ENCODE measurements at regions of chr14 and their contacts with region 1.

Region 1: GRCh38 chr14:65412032-65412846 is at the start of gene FUT8:
- DNase-seq: peak; percentile 98
- H3K4me3 ChIP-seq: peak within 1 kb of the TSS; percentile 76 to 96 (median 85)
- H3K27ac ChIP-seq: peak within 1 kb of the TSS; percentile 61
- H3K4me1 ChIP-seq: peaks cover 18% of the 10 kb centered on the region
- H3K27me3 ChIP-seq: no peaks in the 10 kb centered on the region
- CTCF ChIP-seq: peak; percentile 60 to 80
- POLR2A ChIP-seq: peak; percentile 86
- total RNA-seq, gene FUT8: 27.7 and 38.8 TPM in 2 replicates

Region 2: GRCh38 chr14:65164068-65164824 is 248.0 kb before region 1 on chr14:
- CTCF ChIA-PET with region 1: interaction called, 122 read pairs
- POLR2A ChIA-PET with region 1: interaction called, 3 read pairs
- dilution Hi-C with region 1: no loop called
- intact Hi-C with region 1: loop called (anchors 1 kb)
- DNase-seq: peak; percentile 58
- H3K4me3 ChIP-seq: no peak overlapping the region
- H3K27ac ChIP-seq: no peak overlapping the region
- H3K4me1 ChIP-seq: no peaks in the 10 kb centered on the region
- H3K27me3 ChIP-seq: no peaks in the 10 kb centered on the region
- CTCF ChIP-seq: peak; percentile 36 to 41
- POLR2A ChIP-seq: no peak

Region 3: GRCh38 chr14:65423982-65424381 is 11.7 kb after region 1 on chr14:
- CTCF ChIA-PET with region 1: interaction called, 14 read pairs
- POLR2A ChIA-PET with region 1: no interaction called
- dilution Hi-C with region 1: no loop called
- intact Hi-C with region 1: no loop called
- DNase-seq: no peak
- H3K4me3 ChIP-seq: no peak overlapping the region
- H3K27ac ChIP-seq: no peak overlapping the region
- H3K4me1 ChIP-seq: peaks cover 2% of the 10 kb centered on the region
- H3K27me3 ChIP-seq: no peaks in the 10 kb centered on the region
- CTCF ChIP-seq: no peak
- POLR2A ChIP-seq: no peak

Region 4: GRCh38 chr14:65476273-65476941 is 64.2 kb after region 1 on chr14:
- CTCF ChIA-PET with region 1: no interaction called
- POLR2A ChIA-PET with region 1: no interaction called
- dilution Hi-C with region 1: no loop called
- intact Hi-C with region 1: no loop called
- DNase-seq: no peak
- H3K4me3 ChIP-seq: no peak overlapping the region
- H3K27ac ChIP-seq: no peak overlapping the region
- H3K4me1 ChIP-seq: peaks cover 7% of the 10 kb centered on the region
- H3K27me3 ChIP-seq: no peaks in the 10 kb centered on the region
- CTCF ChIP-seq: no peak
- POLR2A ChIP-seq: no peak

Region 5: GRCh38 chr14:65486868-65487267 is 74.6 kb after region 1 on chr14:
- CTCF ChIA-PET with region 1: interaction called, 10 read pairs
- POLR2A ChIA-PET with region 1: no interaction called
- dilution Hi-C with region 1: no loop called
- intact Hi-C with region 1: no loop called
- DNase-seq: no peak
- H3K4me3 ChIP-seq: no peak overlapping the region
- H3K27ac ChIP-seq: no peak overlapping the region
- H3K4me1 ChIP-seq: no peaks in the 10 kb centered on the region
- H3K27me3 ChIP-seq: no peaks in the 10 kb centered on the region
- CTCF ChIP-seq: no peak
- POLR2A ChIP-seq: no peak

Region 6: GRCh38 chr14:65783576-65783975 is 371.3 kb after region 1 on chr14:
- CTCF ChIA-PET with region 1: interaction called, 11 read pairs
- POLR2A ChIA-PET with region 1: no interaction called
- dilution Hi-C with region 1: no loop called
- intact Hi-C with region 1: no loop called
- DNase-seq: no peak
- H3K4me3 ChIP-seq: no peak overlapping the region
- H3K27ac ChIP-seq: no peak overlapping the region
- H3K4me1 ChIP-seq: no peaks in the 10 kb centered on the region
- H3K27me3 ChIP-seq: no peaks in the 10 kb centered on the region
- CTCF ChIP-seq: no peak
- POLR2A ChIP-seq: no peak

Region 7: GRCh38 chr14:65958664-65959562 is 546.7 kb after region 1 on chr14:
- CTCF ChIA-PET with region 1: interaction called, 135 read pairs
- POLR2A ChIA-PET with region 1: no interaction called
- dilution Hi-C with region 1: no loop called
- intact Hi-C with region 1: loop called (anchors 1 kb)
- DNase-seq: peak; percentile 35
- H3K4me3 ChIP-seq: no peak overlapping the region
- H3K27ac ChIP-seq: no peak overlapping the region
- H3K4me1 ChIP-seq: no peaks in the 10 kb centered on the region
- H3K27me3 ChIP-seq: no peaks in the 10 kb centered on the region
- CTCF ChIP-seq: peak; percentile 5 to 16
- POLR2A ChIP-seq: no peak